HCT116 (cell line): ENCODE measurements at regions of chr20 and their contacts with region 1.

Region 1: DNA sequence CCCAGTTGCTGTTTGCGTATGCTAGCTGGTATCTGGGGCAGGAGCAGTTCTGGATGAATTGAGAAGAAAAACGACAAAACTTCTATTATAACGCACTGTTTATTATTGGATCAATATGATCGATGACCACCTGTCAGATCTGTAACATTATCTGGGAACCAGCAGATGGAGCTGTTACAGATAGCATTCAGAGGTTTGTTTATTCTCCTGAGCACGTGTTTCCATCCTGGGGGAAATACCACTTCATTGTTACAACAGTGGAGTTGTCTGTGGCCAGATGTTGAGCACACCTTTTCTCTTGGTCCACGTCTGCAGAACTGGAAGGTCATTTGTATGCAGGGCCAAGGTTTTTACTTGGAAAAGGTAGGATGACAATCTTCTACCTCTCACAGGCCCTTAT is 16.0 kb upstream of the NKX2-2 start:
- DNase-seq: peak; percentile 38
- ATAC-seq: peak; percentile 81
- H3K4me3 ChIP-seq: no peak overlapping the region
- H3K27ac ChIP-seq: no peak overlapping the region
- H3K4me1 ChIP-seq: peaks cover 0 to 4% of the 10 kb centered on the region in 2 experiments; a peak in 1 of 4 replicates
- H3K27me3 ChIP-seq: peaks cover 19% of the 10 kb centered on the region; the same call in 1 of the 2 replicates
- CTCF ChIP-seq: peak in 2 of 3 experiments; percentile 58 to 65; a peak in 4 of 6 replicates
- POLR2A ChIP-seq: no peak
- RAD21 ChIP-seq: peak; percentile 28; the same call in 1 of the 2 replicates

Region 2: DNA sequence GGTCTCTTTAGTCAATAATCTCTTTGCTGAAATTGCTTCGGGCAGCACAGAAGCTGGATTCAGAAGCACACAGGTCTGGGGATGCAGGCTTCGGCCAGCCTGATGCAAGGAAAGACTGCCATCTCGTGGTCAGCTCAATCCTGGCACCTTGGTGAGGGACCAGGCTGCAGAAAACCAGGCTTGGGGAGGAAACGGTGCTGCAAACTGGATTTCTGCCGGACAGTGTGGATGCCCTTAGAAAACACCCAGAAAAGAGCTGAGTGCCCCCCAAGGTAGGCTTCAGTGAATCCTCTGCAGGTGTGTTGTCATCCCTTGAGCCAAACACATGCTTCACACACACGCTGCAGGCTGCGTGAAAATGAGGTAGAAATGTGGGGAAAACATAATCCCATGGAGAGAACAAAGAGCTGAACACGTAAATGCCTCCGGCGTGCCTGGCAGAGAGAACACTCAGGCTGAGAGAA is 85.8 kb after region 1 on chr20:
- CTCF ChIA-PET with region 1: interaction called, 15 read pairs
- POLR2A ChIA-PET with region 1: no interaction called
- RAD21 ChIA-PET with region 1: interaction called in 1 of 2 experiments, 4 read pairs
- intact Hi-C with region 1: loop called (anchors 2 kb)
- DNase-seq: peak; percentile 26
- ATAC-seq: peak; percentile 98
- H3K4me3 ChIP-seq: no peak overlapping the region
- H3K27ac ChIP-seq: no peak overlapping the region
- H3K4me1 ChIP-seq: no peaks in the 10 kb centered on the region; a peak in 1 of 4 replicates
- H3K27me3 ChIP-seq: peaks cover 4% of the 10 kb centered on the region; the same call in 1 of the 2 replicates
- CTCF ChIP-seq: peak; percentile 32 to 90 (median 85); a peak in 5 of 6 replicates
- POLR2A ChIP-seq: no peak
- RAD21 ChIP-seq: peak; percentile 68